ENCODE measurements at regions of chr1 and their contacts with region 1.

Region 1: DNA sequence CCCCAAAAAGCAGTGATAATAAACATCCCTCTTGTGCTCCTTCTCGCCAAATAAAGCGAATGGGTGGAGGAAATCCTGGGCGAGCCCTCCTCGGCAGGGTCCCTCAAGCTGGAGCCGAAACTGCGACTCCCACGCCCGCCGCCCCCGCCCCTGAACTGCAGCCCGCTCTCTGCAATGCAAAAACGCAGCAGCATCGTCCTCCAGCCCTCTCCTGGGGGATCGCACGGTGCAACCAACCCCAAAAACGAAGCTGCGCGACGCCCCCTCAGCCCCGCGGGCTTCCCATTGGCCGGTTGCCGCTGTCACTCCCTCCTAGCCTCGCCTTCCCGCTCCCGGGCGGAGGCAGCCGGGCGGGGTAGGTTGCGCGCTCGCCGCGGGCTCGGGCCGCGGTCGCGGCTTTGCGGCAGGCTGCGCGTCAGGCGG is at the start of gene TMCC2:
- DNase-seq: peak; percentile 97
- ATAC-seq: peak; percentile 96
- H3K4me3 Mint-ChIP-seq: peak within 1 kb of the TSS; percentile 82
- H3K27ac Mint-ChIP-seq: peak within 1 kb of the TSS; percentile 95
- H3K4me1 Mint-ChIP-seq: peaks cover 34% of the 10 kb centered on the region
- H3K27me3 Mint-ChIP-seq: peaks cover 15% of the 10 kb centered on the region
- CTCF ChIP-seq: no peak
- total RNA-seq, gene TMCC2: 9.5 to 11.2 TPM (median 11.2 TPM) in 3 replicates

Region 2: GRCh38 chr1:205088341-205088740 is 139.3 kb before region 1 on chr1:
- CTCF ChIA-PET with region 1: no interaction called
- POLR2A ChIA-PET with region 1: no interaction called
- DNase-seq: no peak
- ATAC-seq: no peak
- H3K4me3 Mint-ChIP-seq: no peak overlapping the region
- H3K27ac Mint-ChIP-seq: no peak overlapping the region
- H3K4me1 Mint-ChIP-seq: no peaks in the 10 kb centered on the region
- H3K27me3 Mint-ChIP-seq: no peaks in the 10 kb centered on the region
- CTCF ChIP-seq: no peak

Region 3: DNA sequence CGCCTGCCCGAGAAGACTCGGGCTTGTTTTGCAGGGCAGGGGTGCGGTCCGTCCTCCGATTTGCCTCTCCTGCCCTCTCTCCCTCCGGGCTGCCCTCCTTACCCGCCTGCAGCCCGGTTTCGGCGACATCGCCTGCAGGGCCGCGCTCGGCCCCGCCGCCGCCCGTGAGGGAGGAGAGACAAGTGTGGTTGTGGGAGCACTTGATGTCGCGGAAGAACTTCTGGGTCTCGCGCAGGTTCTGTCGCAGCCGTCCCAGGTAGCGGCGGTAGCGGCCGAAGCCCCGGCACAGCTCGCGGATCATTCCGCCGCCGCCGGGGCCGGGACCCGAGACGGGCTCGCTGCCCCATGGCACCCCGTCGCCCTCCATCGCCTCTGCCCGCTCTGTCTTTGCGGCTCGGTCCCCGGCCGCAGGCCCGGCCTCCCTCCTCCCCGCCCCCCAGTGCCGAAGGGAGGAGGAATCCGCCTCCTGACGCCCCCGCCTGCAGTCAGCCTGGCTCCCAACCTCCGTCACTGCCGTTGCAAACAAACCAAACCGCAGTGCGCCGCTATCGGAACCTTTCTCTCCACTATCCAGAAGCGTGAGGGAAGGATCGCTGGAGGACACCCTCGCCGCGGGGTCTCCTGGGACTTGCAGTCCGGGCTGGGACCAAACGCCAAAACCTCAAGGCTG is 16.3 kb before region 1 on chr1 and contains the start of gene DSTYK:
- CTCF ChIA-PET with region 1: interaction called, 8 read pairs
- POLR2A ChIA-PET with region 1: interaction called, 16 read pairs
- DNase-seq: peak; percentile 97
- ATAC-seq: peak; percentile 91
- H3K4me3 Mint-ChIP-seq: peak within 1 kb of the TSS; percentile 88
- H3K27ac Mint-ChIP-seq: peak within 1 kb of the TSS; percentile 93
- H3K4me1 Mint-ChIP-seq: peaks cover 23% of the 10 kb centered on the region
- H3K27me3 Mint-ChIP-seq: no peaks in the 10 kb centered on the region
- CTCF ChIP-seq: no peak
- total RNA-seq, gene DSTYK: 10.3 to 11.6 TPM (median 11.0 TPM) in 3 replicates

Region 4: DNA sequence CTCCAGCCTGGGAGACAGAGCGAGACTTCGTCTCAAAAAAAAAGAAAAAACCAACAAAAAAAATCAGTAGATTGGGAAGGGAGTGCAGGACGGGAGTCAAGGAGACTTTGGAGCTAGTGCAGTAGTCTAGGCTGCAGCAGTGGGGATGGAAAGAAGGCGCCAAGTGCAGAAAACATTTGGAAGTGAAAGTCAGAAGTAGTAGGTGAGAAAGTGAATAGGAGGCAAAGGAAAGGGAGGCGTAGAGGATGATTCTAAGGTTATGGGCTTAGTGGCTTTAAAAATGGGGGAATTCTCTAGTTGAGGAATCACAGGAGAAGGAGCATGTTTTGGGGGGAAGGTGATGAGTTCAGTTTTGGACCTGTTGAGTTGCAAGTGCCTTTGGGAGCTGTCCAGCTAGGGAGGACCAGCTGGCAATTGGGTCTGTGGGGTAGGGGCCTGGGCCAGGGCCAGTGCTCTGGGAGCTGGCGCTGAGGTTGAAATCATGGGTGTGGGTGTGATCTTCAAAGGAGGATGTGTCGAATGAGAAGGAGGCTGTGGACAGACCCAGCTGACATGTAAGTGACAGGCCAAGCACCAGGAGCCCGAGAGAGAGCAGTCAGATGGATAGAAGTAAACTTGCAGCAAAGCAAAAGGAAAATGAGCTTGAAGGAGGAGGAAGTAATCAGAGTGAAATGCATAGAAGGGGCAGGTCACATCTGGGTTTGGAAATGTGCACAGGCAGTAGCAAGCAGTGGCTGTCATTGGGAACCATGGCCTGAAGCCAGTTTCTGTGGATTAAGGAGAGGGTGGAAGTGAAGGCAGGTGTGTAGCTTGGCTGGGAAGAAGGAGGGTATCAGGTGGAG is 16.0 kb after region 1 on chr1:
- CTCF ChIA-PET with region 1: interaction called, 32 read pairs
- POLR2A ChIA-PET with region 1: no interaction called
- DNase-seq: no peak
- ATAC-seq: no peak
- H3K4me3 Mint-ChIP-seq: no peak overlapping the region
- H3K27ac Mint-ChIP-seq: no peak overlapping the region
- H3K4me1 Mint-ChIP-seq: peaks cover 7% of the 10 kb centered on the region; the same call in 1 of the 2 replicates
- H3K27me3 Mint-ChIP-seq: no peaks in the 10 kb centered on the region
- CTCF ChIP-seq: no peak

Region 5: DNA sequence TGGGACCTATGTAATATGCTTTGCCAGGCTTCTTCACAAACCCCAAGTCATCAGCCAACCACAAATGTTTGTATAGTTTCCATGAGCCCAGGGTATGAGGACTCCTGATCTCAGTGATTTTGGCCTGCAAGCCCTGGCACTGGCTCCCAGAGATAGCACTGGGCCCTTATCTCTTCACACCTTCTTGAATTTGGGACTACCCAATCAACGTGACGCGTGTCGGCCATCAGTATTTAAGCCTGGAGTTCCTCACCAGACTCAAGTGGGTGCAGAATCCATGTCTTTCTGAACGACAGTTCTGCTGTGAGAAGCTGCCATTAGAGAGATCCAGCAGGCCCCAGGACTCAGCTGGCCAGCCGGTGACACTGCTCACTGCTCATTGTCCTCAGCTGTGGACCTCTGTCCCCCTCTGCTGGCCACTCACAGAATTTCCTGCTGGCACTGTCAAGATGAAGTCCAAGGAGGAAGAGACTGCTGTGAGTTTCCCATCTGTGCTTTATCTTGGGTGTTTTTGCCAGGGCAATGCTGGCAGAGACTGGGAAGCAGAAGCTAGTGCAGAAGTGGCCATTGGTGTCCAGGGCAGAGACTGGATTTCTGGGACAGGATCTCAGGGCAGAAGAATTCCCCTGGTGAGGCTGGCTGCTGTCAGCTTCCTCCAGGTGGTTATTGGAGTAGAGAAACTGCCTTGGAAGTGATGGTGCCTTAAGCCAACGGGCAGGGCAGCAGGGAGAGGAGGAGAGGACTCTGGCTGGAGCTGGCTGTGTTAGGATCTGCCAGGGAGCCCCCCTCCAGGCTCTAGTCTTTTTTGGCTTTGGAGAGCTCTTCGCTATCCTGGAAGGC is 28.6 kb after region 1 on chr1:
- CTCF ChIA-PET with region 1: interaction called, 166 read pairs
- POLR2A ChIA-PET with region 1: interaction called, 6 read pairs
- DNase-seq: peak; percentile 93
- ATAC-seq: peak; percentile 90
- H3K4me3 Mint-ChIP-seq: no peak overlapping the region
- H3K27ac Mint-ChIP-seq: 0 out of 2 replicates have a peak overlapping the region, but pooled peaks have one; percentile 83
- H3K4me1 Mint-ChIP-seq: peaks cover 17% of the 10 kb centered on the region
- H3K27me3 Mint-ChIP-seq: no peaks in the 10 kb centered on the region
- CTCF ChIP-seq: peak; percentile 98

Measured in WTC11 (cell line).